Heart right ventricle (tissue), 16 donors: ENCODE measurements at regions of chr2 and their contacts with region 1.

Region 1: DNA sequence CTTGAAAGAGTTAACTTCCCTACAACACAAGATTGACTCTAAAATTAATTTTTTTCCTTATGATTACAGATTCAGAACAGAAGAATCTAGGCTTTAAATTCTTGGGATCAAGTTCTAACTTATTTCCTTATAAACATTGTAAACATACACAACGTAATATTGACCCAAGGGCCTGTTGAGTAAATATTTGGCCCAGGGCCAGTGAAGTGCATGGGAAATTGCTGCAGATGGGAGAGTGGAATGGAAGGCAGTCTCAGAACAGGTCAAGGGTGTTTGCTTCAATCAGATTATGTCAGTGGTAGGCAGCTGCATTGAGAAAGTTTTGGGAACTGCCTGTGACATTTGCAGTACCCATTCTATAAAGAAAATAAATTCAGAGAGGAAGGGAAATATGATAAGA is 137.6 kb downstream of the MYO1B start:
- DNase-seq: peak in 1 of 2 donors; percentile 16
- ATAC-seq: peak in 2 of 8 donors; percentile 28 to 63
- H3K4me3 ChIP-seq: no peak overlapping the region
- H3K27ac ChIP-seq: peak overlapping the region in 3 of 10 donors; percentile 4 to 62 (median 41)
- H3K4me1 ChIP-seq: peaks cover 0 to 34% (median 18%) of the 10 kb centered on the region in 9 donors
- H3K27me3 ChIP-seq: no peaks in the 10 kb centered on the region
- CTCF ChIP-seq: no peak

Region 2: DNA sequence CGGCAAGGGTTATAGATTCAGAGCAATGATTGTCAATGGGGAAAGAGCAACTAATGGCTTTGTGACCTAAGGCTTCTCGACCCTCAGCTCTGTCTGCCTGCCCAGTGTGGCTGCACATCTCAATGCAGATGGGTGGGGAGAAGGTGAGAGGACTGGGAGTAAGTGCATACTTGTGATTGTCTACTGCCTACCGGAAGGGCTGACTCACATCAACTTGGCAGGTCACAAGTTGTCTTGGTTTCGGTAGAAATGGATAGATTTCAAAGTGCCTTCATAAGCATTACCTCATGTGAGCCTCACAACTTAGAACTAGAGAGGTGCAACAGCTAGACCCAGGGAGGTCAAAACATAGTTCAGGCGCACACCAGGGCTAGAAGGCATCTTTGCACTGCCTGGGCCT is 398.2 kb before region 1 on chr2:
- intact Hi-C with region 1: no loop called
- DNase-seq: no peak
- ATAC-seq: no peak
- H3K4me3 ChIP-seq: no peak overlapping the region
- H3K27ac ChIP-seq: no peak overlapping the region
- H3K4me1 ChIP-seq: peaks cover 0 to 35% (median 20%) of the 10 kb centered on the region in 9 donors
- H3K27me3 ChIP-seq: no peaks in the 10 kb centered on the region
- CTCF ChIP-seq: no peak

Region 3: DNA sequence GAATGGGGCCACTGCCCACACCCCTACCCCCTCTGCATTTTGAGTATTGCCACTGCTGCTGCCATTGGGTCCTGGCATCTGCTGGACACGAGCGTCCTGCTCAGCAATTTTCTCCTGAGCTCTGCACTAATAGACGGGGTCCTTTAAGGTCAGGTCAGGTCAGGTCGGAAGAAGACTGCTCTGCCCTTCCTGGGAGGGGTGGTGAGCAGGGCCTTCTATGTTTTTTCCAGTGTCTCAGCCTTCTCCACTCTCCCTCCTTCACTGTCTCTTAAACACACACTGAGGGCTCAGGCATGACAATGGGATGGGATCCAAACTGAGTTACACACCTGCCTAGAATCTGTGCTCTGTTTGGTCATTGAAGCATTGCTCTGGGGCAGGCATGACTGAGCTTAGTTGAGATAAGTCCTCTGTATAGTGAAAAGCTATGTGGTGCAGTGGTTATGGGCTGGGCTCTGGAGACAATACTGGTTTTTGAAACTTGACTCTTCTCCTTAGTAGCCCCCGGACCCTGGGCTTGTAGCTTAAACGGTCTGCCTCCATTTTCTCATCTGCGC is 127.0 kb before region 1 on chr2:
- intact Hi-C with region 1: loop called in 1 of 10 experiments (anchors 10 kb)
- DNase-seq: no peak
- ATAC-seq: peak in 4 of 8 donors; percentile 18 to 41 (median 24)
- H3K4me3 ChIP-seq: no peak overlapping the region
- H3K27ac ChIP-seq: no peak overlapping the region
- H3K4me1 ChIP-seq: peaks cover 0 to 63% (median 22%) of the 10 kb centered on the region in 9 donors
- H3K27me3 ChIP-seq: no peaks in the 10 kb centered on the region
- CTCF ChIP-seq: no peak